Psoas muscle (tissue), 8 donors: ENCODE measurements at regions of chr1 and their contacts with region 1.

Region 1: DNA sequence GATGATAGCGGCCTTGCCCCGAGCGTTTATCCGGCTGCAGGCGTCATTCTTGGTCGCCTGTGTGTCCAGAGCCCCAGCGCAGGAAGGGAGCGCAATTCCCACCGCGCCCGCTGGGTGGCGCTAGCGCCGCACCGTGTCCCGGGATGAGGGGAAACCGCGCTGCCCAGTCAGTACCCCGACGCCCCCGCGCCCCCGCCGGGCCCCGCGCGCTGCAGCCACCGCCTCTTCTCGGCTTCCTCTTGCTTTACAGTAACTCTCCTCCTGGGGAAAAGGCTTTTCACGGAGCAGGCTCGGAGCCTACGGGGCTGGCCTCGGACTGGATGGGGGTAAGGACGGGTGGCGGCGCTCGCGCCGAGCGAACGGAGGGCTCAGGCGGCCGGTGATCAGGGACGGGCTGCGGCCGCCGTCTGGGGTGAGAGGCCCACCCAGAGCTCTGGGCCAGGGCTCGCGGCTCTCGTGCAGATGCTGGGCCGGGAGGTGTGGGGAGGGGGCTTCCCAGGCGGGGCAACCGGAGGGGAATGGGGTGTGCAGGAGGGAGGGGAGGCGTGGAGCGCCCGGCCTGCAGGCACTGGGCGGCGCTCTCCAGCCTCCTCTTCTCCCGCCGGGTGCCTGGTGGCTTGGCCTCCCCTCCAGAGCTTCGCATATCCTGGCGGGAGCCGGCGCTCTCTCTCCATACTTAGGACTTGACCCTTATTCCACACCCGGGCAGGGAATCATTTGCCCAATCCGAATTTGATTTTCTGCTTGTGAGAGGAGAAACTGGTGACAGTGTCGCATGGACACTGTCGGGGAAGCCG is 29.8 kb downstream of the TEX35 start:
- DNase-seq: peak; percentile 90 to 91
- ATAC-seq: peak; percentile 84 to 92 (median 86)
- H3K4me3 ChIP-seq: peak overlapping the region; percentile 82
- H3K27ac ChIP-seq: peak overlapping the region; percentile 53
- H3K4me1 ChIP-seq: peaks cover 9% of the 10 kb centered on the region
- H3K27me3 ChIP-seq: no peaks in the 10 kb centered on the region
- CTCF ChIP-seq: peak; percentile 99

Region 2: DNA sequence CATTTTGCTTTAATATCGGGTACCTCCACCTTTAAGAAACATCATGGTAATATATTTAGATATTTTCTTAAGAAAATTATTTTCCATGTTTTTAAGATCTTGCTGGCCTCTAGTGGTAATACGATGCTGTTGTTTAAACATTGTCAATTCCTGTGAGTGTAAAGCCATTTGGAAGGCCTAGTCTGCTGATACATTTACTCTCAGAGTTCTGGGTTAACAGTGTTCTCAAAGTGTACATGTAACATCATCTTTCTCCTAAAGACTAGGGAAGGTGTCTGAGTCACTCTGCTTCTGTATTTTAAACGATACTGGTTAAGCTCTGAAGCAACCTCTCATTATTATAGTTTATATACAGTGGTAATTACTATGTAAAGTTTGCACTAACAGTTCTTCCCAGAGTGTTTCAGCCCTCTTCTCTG is 259.8 kb before region 1 on chr1:
- intact Hi-C with region 1: no loop called
- DNase-seq: no peak
- ATAC-seq: peak in 1 of 4 donors; percentile 37
- H3K4me3 ChIP-seq: no peak overlapping the region
- H3K27ac ChIP-seq: no peak overlapping the region
- H3K4me1 ChIP-seq: no peaks in the 10 kb centered on the region
- H3K27me3 ChIP-seq: no peaks in the 10 kb centered on the region
- CTCF ChIP-seq: peak; percentile 46

Region 3: GRCh38 chr1:178749581-178750166 is 206.9 kb after region 1 on chr1:
- intact Hi-C with region 1: loop called (anchors 1 to 5 kb)
- DNase-seq: no peak
- ATAC-seq: no peak
- H3K4me3 ChIP-seq: no peak overlapping the region
- H3K27ac ChIP-seq: no peak overlapping the region
- H3K4me1 ChIP-seq: no peaks in the 10 kb centered on the region
- H3K27me3 ChIP-seq: no peaks in the 10 kb centered on the region
- CTCF ChIP-seq: no peak